ENCODE measurements at regions of chrX and their contacts with region 1.

Region 1: GRCh38 chrX:57918750-57919436 is 8.6 kb upstream of the ZXDA start:
- DNase-seq: no peak
- H3K4me3 ChIP-seq: peak overlapping the region in 1 of 4 donors; percentile 18
- H3K27ac ChIP-seq: no peak overlapping the region
- H3K4me1 ChIP-seq: peaks cover 0 to 5% (median 2%) of the 10 kb centered on the region in 4 donors
- H3K27me3 ChIP-seq: no peaks in the 10 kb centered on the region
- CTCF ChIP-seq: peak; percentile 46 to 51 (median 49)
- EP300 ChIP-seq: no peak
- POLR2A ChIP-seq: no peak

Region 2: DNA sequence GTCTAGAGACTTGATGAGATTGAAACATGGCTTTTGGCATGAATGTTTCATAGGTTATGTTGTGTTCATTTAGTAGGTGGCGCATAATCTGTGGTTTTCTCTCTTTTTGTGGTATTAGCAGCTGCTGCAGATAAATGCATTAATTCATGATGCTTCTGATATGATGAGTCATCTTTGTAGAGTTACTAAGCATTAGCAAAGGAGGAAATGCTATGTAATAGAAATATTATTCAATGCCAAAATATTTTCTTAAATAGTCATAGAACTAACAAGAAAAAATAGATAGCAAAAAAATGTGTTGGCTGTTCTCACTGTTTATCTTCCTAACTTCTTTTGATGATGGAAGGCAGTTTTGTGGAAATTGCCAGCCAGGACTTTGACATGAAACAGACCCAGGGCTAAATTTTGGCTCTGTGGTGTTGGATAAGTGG is 323.5 kb before region 1 on chrX:
- intact Hi-C with region 1: loop called (anchors 10 kb)
- DNase-seq: no peak
- H3K4me3 ChIP-seq: peak overlapping the region in 3 of 4 donors; percentile 7 to 32 (median 25)
- H3K27ac ChIP-seq: peak overlapping the region; percentile 19 to 69 (median 64)
- H3K4me1 ChIP-seq: peaks cover 9 to 57% (median 42%) of the 10 kb centered on the region in 4 donors
- H3K27me3 ChIP-seq: no peaks in the 10 kb centered on the region
- CTCF ChIP-seq: no peak
- EP300 ChIP-seq: no peak
- POLR2A ChIP-seq: no peak

Region 3: GRCh38 chrX:57821703-57822375 is 97.1 kb before region 1 on chrX:
- intact Hi-C with region 1: loop called (anchors 2 kb)
- DNase-seq: no peak
- H3K4me3 ChIP-seq: peak overlapping the region; percentile 24 to 39 (median 28)
- H3K27ac ChIP-seq: no peak overlapping the region
- H3K4me1 ChIP-seq: peaks cover 0 to 4% (median 0%) of the 10 kb centered on the region in 4 donors
- H3K27me3 ChIP-seq: no peaks in the 10 kb centered on the region
- CTCF ChIP-seq: peak; percentile 63 to 68 (median 64)
- EP300 ChIP-seq: no peak
- POLR2A ChIP-seq: no peak

Measured in esophagus muscularis mucosa (tissue), 4 donors.